Right ventricle myocardium inferior (tissue), 1 donor: ENCODE measurements at regions of chr7 and their contacts with region 1.

Region 1: DNA sequence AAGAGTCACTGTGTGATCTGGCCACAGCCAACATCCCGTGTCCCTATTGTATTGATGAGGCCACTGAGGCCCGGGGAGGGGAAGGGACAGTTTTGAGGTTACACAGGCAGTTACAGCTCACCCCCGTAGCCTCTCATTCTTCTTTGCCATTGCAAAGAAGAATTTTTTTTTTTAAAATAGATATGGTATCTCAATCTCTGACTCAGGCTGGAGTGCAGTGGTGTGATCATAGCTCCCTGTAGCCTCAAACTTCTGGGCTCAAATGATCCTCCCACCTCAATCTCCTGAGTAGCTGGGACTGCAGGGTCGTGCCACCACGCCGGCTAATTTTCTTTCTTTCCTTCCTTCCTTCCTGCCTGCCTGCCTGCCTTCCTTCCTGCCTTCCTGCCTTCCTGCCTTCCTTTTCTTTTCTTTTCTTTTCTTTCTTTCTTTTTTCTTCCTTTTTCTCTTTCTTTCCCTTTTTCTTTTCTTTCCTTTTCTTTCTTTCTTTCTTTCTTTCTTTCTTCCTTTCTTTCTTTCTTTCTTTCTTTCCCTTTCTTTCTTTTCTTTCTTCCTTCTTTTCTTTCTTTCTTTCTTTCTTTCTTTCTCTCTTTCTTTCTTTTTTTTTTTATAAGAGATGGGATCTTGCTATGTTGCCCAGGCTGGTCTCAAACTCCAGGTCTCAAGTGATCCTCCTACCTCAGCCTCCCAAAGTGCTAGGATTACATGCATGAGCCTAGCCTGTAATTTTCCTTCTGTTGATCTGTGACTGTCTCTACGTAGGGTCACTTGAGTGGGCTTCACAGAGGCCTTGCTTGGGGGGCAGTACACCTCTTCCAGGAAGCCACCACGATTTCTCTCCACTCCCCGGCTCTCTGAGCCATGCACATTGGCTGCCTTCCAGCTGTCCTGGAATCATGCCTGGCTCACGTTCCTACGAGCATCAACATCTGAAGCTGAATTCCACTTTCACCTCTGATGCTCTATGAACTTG is 31.3 kb downstream of the TMEM270 start:
- DNase-seq: no peak
- ATAC-seq: no peak

Region 2: GRCh38 chr7:74032191-74032490 is 139.9 kb after region 1 on chr7:
- intact Hi-C with region 1: loop called (anchors 2 kb)
- DNase-seq: peak; percentile 65
- ATAC-seq: peak; percentile 17